HepG2 (cell line): ENCODE measurements at regions of chr2 and their contacts with region 1.

Region 1: GRCh38 chr2:200820573-200821234 is 9.0 kb downstream of the BZW1 start:
- DNase-seq: no peak
- ATAC-seq: peak; percentile 33; the same call in 2 of the 3 replicates
- H3K4me3 ChIP-seq: no peak overlapping the region
- H3K27ac ChIP-seq: no peak overlapping the region
- H3K4me1 ChIP-seq: 0 out of 2 replicates have a peak, but pooled peaks cover under 1% of the 10 kb centered on the region
- H3K27me3 ChIP-seq: no peaks in the 10 kb centered on the region
- CTCF ChIP-seq: no peak
- EP300 ChIP-seq: no peak
- POLR2A ChIP-seq: no peak
- RAD21 ChIP-seq: no peak

Region 2: GRCh38 chr2:200856806-200857205 is 36.1 kb after region 1 on chr2:
- CTCF ChIA-PET with region 1: no interaction called
- POLR2A ChIA-PET with region 1: no interaction called
- in situ Hi-C with region 1: loop called (anchors 5 kb)
- intact Hi-C with region 1: loop called (anchors 5 kb)
- DNase-seq: no peak
- ATAC-seq: no peak
- H3K4me3 ChIP-seq: no peak overlapping the region
- H3K27ac ChIP-seq: no peak overlapping the region
- H3K4me1 ChIP-seq: peaks cover 31% of the 10 kb centered on the region
- H3K27me3 ChIP-seq: no peaks in the 10 kb centered on the region
- CTCF ChIP-seq: no peak
- EP300 ChIP-seq: no peak
- POLR2A ChIP-seq: no peak; a peak in 1 of 4 replicates
- RAD21 ChIP-seq: no peak

Region 3: GRCh38 chr2:201116115-201116958 is 295.6 kb after region 1 on chr2 and contains the start of gene CFLAR:
- CTCF ChIA-PET with region 1: no interaction called
- POLR2A ChIA-PET with region 1: no interaction called
- in situ Hi-C with region 1: no loop called
- intact Hi-C with region 1: no loop called
- DNase-seq: peak; percentile 94
- ATAC-seq: peak; percentile 84
- H3K4me3 ChIP-seq: peak within 1 kb of the TSS; percentile 86 to 90 (median 86)
- H3K27ac ChIP-seq: peak within 1 kb of the TSS; percentile 91
- H3K4me1 ChIP-seq: peaks cover 61% of the 10 kb centered on the region
- H3K27me3 ChIP-seq: no peaks in the 10 kb centered on the region; a peak in 2 of 5 replicates
- CTCF ChIP-seq: peak; percentile 22; the same call in 1 of the 2 replicates
- EP300 ChIP-seq: peak in 1 of 2 experiments; percentile 37; a peak in 1 of 4 replicates
- POLR2A ChIP-seq: peak; percentile 91 to 94
- RAD21 ChIP-seq: no peak; the same call in none of the 2 replicates
- total RNA-seq, gene CFLAR: 92.1 and 109 TPM in 2 replicates